Mammary epithelial cell (primary cell): ENCODE measurements at regions of chr11 and their contacts with region 1.

Region 1: GRCh38 chr11:132028380-132029240 is 658.2 kb downstream of the NTM start:
- DNase-seq: no peak
- H3K4me3 ChIP-seq: no peak overlapping the region
- H3K27ac ChIP-seq: no peak overlapping the region
- H3K4me1 ChIP-seq: peaks cover 35% of the 10 kb centered on the region
- H3K27me3 ChIP-seq: no peaks in the 10 kb centered on the region
- CTCF ChIP-seq: peak; percentile 62 to 64

Region 2: DNA sequence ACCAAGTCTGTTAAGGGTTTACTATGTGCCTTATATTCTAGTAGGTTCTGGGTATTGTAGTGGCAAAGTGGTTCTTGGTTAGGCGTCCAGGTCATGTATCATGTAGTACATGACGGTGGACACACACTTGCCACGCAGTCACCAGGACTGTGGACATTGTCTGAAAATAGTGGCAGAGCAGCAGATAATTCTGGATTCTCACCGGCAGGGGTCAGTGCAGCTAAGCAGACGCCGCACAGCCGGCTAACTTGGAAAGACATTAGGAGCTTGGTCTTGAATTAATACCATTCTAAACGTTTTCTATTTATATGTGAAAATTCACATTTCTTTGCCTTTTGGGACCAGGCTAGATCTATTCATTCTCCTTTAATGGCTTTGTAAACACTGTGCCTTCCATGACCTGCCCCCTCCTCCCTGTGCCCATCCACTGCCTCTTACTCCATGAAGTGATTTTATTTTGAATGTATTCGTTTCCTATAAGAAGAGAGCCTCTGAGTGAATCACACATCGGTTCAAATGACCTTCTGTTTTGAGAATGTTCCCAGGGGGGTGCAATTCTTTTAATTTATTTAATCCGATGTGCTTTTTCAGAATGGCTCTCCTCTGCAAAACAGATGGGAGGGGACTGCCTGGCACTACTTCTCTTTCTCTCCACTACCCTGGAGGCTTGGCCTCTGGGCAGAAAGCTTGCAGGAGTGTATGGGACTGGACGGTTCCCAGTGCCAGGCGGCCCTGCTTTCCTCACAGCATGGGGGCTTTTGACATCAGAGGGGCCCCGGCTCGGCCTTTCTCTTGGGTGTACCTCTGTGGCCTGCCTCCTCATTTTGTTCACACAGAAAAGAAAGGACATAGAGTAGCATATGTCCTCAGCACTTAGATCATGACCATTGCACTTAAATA is 280.2 kb before region 1 on chr11:
- CTCF ChIA-PET with region 1: interaction called, 3 read pairs
- dilution Hi-C with region 1: no loop called
- in situ Hi-C with region 1: no loop called
- intact Hi-C with region 1: loop called (anchors 5 kb)
- DNase-seq: peak; percentile 42
- H3K4me3 ChIP-seq: no peak overlapping the region
- H3K27ac ChIP-seq: no peak overlapping the region
- H3K4me1 ChIP-seq: peaks cover 6% of the 10 kb centered on the region
- H3K27me3 ChIP-seq: no peaks in the 10 kb centered on the region
- CTCF ChIP-seq: peak; percentile 85 to 92

Region 3: DNA sequence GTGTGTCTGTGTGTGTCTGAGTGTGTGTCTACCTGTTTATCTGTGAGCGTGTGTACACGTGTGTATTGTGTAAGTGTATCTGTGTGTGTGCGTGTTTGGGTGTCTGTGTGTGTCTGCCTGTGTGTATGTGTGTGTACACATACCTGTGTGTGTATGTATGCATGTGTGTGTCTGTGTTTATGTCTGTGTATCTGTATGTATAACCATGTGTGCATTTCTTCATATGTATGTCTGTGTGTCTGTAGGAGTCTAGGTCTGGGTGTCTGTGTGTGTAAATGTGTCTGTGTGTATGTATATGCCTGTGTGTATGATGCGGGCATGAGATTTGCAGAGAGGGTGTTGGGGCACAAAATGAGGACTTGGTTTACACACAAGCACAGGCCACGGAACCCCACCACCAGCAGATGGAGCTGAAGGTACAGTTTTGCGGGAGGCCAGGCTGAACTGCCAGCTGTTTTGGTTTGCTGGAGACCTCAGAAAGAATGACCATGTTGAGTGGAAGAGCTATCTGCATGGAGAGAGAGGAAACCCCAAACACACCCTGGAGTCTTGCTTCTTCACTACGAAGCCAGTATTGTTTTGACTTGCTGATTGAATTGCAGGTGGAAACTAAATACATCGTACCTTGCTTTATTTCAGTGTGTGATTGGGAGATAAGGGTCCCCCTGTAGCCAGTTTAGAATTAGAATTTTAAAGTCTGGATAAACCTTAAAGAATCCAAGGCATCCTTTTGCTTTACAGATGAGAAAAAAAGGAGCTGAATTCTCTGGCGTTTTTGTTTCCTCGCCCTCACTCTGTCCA is 161.0 kb before region 1 on chr11:
- CTCF ChIA-PET with region 1: no interaction called
- dilution Hi-C with region 1: no loop called
- in situ Hi-C with region 1: no loop called
- intact Hi-C with region 1: loop called (anchors 1 kb)
- DNase-seq: peak; percentile 70
- H3K4me3 ChIP-seq: no peak overlapping the region
- H3K27ac ChIP-seq: no peak overlapping the region
- H3K4me1 ChIP-seq: peaks cover 6% of the 10 kb centered on the region
- H3K27me3 ChIP-seq: no peaks in the 10 kb centered on the region
- CTCF ChIP-seq: peak; percentile 95 to 98

Region 4: DNA sequence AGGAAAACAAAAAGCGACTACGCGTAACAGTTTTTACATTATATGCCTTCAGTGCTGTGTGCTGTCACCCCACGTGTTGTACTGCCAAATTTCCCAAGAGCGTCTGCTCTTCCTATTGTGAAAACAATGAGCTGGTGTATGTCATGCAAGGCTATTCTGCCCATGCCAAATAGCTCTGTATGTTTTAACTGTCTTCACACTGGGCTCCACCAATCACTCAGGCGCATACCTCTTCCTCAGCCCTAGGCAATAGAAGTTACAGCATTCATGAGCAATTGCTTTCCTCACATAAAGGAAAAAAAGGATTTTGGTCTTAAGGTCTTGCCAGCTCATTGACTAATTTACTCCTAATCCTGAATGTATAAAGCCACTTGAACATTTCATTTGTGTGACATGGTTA is 51.4 kb before region 1 on chr11:
- CTCF ChIA-PET with region 1: no interaction called
- dilution Hi-C with region 1: no loop called
- in situ Hi-C with region 1: no loop called
- intact Hi-C with region 1: loop called (anchors 1 kb)
- DNase-seq: peak; percentile 95
- H3K4me3 ChIP-seq: peak overlapping the region in 2 of 3 experiments; percentile 21 to 26
- H3K27ac ChIP-seq: peak overlapping the region; percentile 95
- H3K4me1 ChIP-seq: peaks cover 29% of the 10 kb centered on the region
- H3K27me3 ChIP-seq: no peaks in the 10 kb centered on the region
- CTCF ChIP-seq: no peak

Region 5: DNA sequence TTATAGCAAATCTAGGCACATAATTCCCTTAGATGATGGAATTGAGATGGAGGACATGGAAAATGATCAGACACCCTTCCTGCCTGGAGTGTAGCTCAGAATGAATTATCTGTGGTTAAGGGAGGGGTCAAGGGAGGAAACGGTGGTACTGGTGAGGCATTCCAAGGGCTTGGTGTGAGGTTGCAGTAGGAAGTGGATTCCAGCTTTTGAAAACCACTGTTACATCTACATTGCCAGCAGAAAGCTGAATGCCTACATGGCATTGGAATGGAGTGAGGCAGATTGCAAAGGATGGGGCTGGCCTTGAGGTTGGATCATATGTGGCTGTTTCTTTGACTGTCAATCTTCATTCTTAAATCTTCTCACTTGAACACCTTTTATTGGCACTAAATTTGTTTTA is 26.2 kb after region 1 on chr11:
- CTCF ChIA-PET with region 1: no interaction called
- dilution Hi-C with region 1: no loop called
- in situ Hi-C with region 1: no loop called
- intact Hi-C with region 1: loop called (anchors 2 kb)
- DNase-seq: peak; percentile 81
- H3K4me3 ChIP-seq: no peak overlapping the region
- H3K27ac ChIP-seq: peak overlapping the region; percentile 69
- H3K4me1 ChIP-seq: peaks cover 56% of the 10 kb centered on the region
- H3K27me3 ChIP-seq: no peaks in the 10 kb centered on the region
- CTCF ChIP-seq: no peak

Region 6: DNA sequence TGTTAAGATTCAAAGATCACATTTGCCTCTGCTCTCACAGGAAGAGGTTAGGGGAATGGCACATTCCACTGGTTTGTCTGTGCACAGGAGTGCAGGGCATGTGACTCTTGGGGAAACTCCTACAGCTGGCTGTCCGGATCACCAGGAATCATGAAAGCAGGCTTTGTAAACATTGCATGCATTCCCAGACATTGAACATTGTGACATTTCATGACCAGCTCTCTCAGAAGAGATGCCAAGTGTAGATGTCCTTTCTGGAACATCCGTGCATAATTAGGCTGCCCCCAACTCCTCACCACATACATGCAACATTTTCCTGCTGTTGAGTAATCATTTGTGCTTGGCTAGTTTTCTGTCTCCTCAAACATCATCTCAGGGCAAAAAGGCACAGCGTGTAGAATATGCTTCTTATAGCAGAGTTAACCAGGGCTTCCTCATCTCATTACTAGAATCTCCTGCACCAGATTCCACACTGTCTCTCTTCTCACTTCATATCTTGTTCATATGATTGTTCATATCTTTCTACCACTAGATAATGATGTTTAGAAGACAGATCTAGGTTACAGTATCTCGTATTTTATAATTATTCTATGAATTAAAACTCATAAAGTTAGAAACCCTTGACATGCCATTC is 36.5 kb after region 1 on chr11:
- CTCF ChIA-PET with region 1: no interaction called
- dilution Hi-C with region 1: no loop called
- in situ Hi-C with region 1: no loop called
- intact Hi-C with region 1: loop called (anchors 2 kb)
- DNase-seq: peak; percentile 98
- H3K4me3 ChIP-seq: no peak overlapping the region
- H3K27ac ChIP-seq: peak overlapping the region; percentile 95
- H3K4me1 ChIP-seq: peaks cover 69% of the 10 kb centered on the region
- H3K27me3 ChIP-seq: no peaks in the 10 kb centered on the region
- CTCF ChIP-seq: no peak

Region 7: DNA sequence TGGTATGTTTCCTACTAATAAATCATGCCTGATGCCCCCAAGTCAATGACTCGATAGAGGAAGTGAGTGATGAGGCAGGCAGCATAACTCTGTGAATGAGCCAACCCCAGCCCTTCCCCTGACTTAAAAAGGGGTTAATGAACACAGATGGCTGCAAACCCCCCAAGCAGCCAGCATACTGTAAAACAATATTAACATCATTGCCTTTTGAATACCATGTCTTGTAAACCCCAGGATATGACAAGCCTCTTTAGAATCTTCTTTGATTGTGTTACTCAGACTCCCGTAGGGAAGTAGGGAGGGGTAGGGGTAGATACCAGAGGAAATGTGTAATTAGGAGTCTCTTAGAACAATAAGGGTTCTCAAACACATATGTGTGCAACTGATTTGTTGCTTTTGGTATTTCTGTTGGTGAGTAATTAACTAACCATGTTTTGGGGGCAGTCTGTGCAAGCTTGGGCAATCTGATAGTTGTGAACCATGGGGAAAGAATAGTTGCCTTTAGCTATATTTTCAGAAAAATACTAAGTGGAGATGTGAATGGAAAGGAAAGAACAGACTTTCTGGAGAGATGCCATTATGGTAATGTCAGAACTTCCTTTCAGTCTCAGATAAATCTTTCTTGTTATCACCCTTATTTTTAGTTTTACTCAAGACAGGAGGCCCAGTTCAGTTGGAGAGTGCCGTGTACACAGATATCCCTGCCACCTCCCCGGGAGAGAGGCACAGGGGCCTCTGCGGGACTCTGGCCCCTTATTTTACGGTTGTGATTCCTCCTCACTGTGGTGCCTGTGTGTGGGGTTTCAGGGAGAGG is 43.6 kb after region 1 on chr11:
- CTCF ChIA-PET with region 1: no interaction called
- dilution Hi-C with region 1: no loop called
- in situ Hi-C with region 1: no loop called
- intact Hi-C with region 1: loop called (anchors 2 kb)
- DNase-seq: peak; percentile 97
- H3K4me3 ChIP-seq: no peak overlapping the region
- H3K27ac ChIP-seq: peak overlapping the region; percentile 99
- H3K4me1 ChIP-seq: peaks cover 56% of the 10 kb centered on the region
- H3K27me3 ChIP-seq: no peaks in the 10 kb centered on the region
- CTCF ChIP-seq: no peak